Heart left ventricle (tissue), 16 donors: ENCODE measurements at regions of chr11 and their contacts with region 1.

Region 1: GRCh38 chr11:62445314-62445740 is 26.5 kb downstream of the SCGB1A1 start:
- DNase-seq: peak in 3 of 5 donors; percentile 39 to 52 (median 48)
- ATAC-seq: peak in 3 of 4 donors; percentile 13 to 47 (median 35)
- H3K4me3 ChIP-seq: peak overlapping the region in 2 of 12 donors; percentile 47 to 54
- H3K27ac ChIP-seq: peak overlapping the region in 11 of 12 donors; percentile 65 to 95 (median 82)
- H3K4me1 ChIP-seq: peaks cover 12 to 51% (median 39%) of the 10 kb centered on the region in 12 donors
- H3K27me3 ChIP-seq: no peaks in the 10 kb centered on the region
- CTCF ChIP-seq: no peak
- POLR2A ChIP-seq: no peak

Region 2: GRCh38 chr11:62394825-62395538 is 50.3 kb before region 1 on chr11:
- intact Hi-C with region 1: no loop called
- DNase-seq: peak; percentile 78 to 88 (median 83)
- ATAC-seq: peak; percentile 71 to 84 (median 82)
- H3K4me3 ChIP-seq: peak overlapping the region in 11 of 12 donors; percentile 21 to 60 (median 45)
- H3K27ac ChIP-seq: peak overlapping the region in 11 of 12 donors; percentile 10 to 82 (median 67)
- H3K4me1 ChIP-seq: peaks cover 6 to 50% (median 36%) of the 10 kb centered on the region in 12 donors
- H3K27me3 ChIP-seq: no peaks in the 10 kb centered on the region
- CTCF ChIP-seq: peak; percentile 59 to 85 (median 74)
- POLR2A ChIP-seq: no peak

Region 3: DNA sequence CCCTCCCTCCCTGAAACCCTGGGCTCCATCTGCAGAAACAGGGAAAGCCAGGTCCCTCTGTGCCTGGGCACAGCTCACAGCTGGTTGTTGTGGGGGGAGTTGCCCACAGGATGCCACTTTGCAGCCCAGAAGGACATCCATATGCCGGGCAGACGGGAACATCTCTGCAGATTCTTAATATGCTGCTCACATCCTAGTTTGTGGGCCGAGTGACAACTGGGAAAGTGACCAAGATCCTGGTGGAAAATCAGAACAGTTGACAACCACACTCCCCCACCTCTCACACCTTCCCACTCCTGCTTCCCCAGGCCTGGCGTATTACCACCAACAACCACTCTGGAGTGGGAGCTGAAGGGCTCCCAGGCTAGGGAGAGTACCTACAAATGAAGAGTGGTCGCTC is 33.8 kb before region 1 on chr11:
- intact Hi-C with region 1: no loop called
- DNase-seq: no peak
- ATAC-seq: no peak
- H3K4me3 ChIP-seq: no peak overlapping the region
- H3K27ac ChIP-seq: no peak overlapping the region
- H3K4me1 ChIP-seq: no peaks in the 10 kb centered on the region
- H3K27me3 ChIP-seq: no peaks in the 10 kb centered on the region
- CTCF ChIP-seq: no peak
- POLR2A ChIP-seq: no peak

Region 4: DNA sequence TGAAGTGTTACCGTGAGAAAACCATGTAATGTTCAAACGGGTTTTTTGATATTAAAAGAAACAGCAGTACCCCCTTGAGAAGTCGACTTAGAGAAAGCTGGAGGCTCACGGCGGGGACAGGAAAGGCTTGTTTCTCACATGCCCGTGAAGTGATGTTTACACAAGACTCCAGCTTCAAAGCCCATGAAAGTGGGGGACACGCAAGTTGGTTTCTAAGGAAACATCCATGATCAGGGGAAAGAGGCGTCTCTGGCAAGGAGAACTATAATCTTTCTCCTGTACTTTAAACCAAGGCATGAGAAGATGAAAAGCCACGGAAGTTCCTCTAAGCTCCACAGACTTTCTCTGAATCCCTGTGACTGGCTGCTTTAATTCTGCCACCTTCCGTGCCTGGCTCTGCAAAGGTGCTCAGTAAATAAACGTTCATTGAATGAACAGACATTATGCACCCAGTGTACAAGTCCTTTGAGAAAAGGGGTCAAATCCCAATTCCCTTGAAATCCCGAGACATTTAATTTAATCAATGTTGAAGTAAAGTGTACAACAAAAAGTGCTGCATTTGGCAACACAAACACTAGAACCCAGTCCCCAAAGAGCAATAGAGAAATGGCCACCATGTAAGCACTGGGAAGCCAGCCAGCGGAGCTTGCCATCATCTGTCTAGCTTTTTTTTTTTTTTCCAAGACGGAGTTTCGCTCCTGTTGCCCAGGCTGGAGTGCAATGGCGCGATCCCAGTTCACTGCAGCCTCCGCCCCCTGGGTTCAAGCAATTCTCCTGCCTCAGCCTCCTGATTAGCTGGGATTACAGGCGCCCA is 42.6 kb after region 1 on chr11:
- intact Hi-C with region 1: loop called in 2 of 10 experiments (anchors 5 kb)
- DNase-seq: no peak
- ATAC-seq: no peak
- H3K4me3 ChIP-seq: no peak overlapping the region
- H3K27ac ChIP-seq: peak overlapping the region in 1 of 12 donors; percentile 38
- H3K4me1 ChIP-seq: no peaks in the 10 kb centered on the region
- H3K27me3 ChIP-seq: no peaks in the 10 kb centered on the region
- CTCF ChIP-seq: no peak
- POLR2A ChIP-seq: no peak

Region 5: GRCh38 chr11:62922658-62923431 is 477.5 kb after region 1 on chr11:
- intact Hi-C with region 1: no loop called
- DNase-seq: no peak
- ATAC-seq: no peak
- H3K4me3 ChIP-seq: peak overlapping the region in 1 of 12 donors; percentile 32
- H3K27ac ChIP-seq: no peak overlapping the region
- H3K4me1 ChIP-seq: peaks cover 3 to 51% (median 20%) of the 10 kb centered on the region in 12 donors
- H3K27me3 ChIP-seq: peaks cover 28 to 62% (median 53%) of the 10 kb centered on the region in 9 donors
- CTCF ChIP-seq: peak in 2 of 12 donors; percentile 17 to 27
- POLR2A ChIP-seq: no peak